ENCODE measurements at regions of chr11 and their contacts with region 1.

Region 1: GRCh38 chr11:30573951-30574350 is 12.2 kb downstream of the MPPED2 start:
- DNase-seq: peak; percentile 64
- ATAC-seq: peak; percentile 85
- H3K4me3 ChIP-seq: no peak overlapping the region
- H3K27ac ChIP-seq: no peak overlapping the region
- H3K4me1 ChIP-seq: no peaks in the 10 kb centered on the region
- H3K27me3 ChIP-seq: peaks cover 2% of the 10 kb centered on the region; the same call in 1 of the 2 replicates
- CTCF ChIP-seq: no peak
- POLR2A ChIP-seq: no peak
- RAD21 ChIP-seq: no peak

Region 2: DNA sequence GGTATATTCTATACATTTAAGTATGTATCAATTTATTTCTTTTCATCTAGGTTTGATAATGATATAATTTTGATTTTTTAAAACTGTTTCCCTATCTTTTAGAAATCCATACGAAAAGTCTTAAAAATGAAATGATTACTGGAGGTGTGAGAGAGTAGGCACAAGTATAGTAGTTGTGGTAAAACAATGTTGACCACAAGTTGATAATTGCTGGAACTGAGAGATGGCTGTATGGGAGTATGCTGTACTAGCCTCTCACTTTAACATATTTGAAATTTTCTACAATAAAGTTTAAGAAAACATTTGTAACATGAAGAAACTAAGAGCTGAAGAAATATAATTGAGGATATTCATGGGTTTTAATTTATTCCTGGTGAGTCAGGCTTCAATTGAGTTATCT is 313.1 kb before region 1 on chr11:
- CTCF ChIA-PET with region 1: no interaction called
- POLR2A ChIA-PET with region 1: no interaction called
- dilution Hi-C with region 1: no loop called
- in situ Hi-C with region 1: no loop called
- intact Hi-C with region 1: no loop called
- DNase-seq: no peak
- ATAC-seq: no peak
- H3K4me3 ChIP-seq: no peak overlapping the region
- H3K27ac ChIP-seq: no peak overlapping the region
- H3K4me1 ChIP-seq: no peaks in the 10 kb centered on the region
- H3K27me3 ChIP-seq: no peaks in the 10 kb centered on the region
- CTCF ChIP-seq: no peak
- POLR2A ChIP-seq: no peak
- RAD21 ChIP-seq: no peak

Region 3: DNA sequence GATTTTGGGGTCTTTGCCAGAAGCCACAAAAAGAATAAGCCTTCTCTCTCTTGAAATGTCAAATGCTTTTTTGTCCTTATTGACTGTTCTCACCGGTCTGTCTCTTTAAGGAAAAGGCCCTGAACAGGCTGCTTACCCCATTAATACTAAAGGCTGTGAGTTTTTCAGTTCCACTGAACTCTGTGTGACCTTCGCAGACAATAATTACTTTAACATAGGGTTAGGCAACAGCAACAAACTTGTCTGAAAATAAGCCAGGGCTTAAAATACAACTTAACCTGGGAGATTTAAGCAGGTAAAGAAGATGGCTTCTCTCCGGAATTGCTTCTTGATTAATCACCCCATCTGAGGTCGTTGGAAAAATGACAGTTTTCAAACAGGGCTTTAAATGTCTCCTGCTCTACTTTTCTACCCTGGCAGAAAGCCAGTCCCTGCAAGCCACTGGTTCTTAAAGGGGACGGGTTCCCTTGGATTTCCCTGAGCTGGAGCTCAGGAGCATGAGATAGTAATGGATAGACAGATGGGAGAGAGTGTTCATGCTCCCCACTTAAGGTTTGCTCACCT is 181.6 kb before region 1 on chr11:
- CTCF ChIA-PET with region 1: no interaction called
- POLR2A ChIA-PET with region 1: no interaction called
- dilution Hi-C with region 1: no loop called
- in situ Hi-C with region 1: no loop called
- intact Hi-C with region 1: no loop called
- DNase-seq: no peak
- ATAC-seq: no peak
- H3K4me3 ChIP-seq: no peak overlapping the region
- H3K27ac ChIP-seq: no peak overlapping the region
- H3K4me1 ChIP-seq: no peaks in the 10 kb centered on the region
- H3K27me3 ChIP-seq: no peaks in the 10 kb centered on the region
- CTCF ChIP-seq: no peak
- POLR2A ChIP-seq: no peak
- RAD21 ChIP-seq: no peak

Region 4: DNA sequence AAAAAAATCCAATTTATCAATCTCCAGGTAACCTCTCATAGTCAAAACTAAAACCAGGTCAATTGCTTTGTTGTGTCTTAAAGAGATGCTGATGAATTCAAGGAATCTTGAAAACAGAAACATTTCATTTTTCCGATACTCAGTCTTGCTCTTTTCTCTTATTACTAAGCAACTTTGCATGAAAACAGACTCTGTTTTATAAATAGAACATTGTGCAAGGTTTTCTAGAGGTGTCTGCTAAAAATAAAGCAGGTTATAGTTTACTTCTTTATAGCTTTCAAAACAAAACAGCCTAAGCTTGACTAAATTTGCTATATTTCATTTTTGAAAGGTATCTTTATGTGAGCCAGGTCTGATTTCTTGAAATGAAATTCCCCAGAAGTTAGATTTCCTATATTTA is 141.8 kb before region 1 on chr11:
- CTCF ChIA-PET with region 1: no interaction called
- POLR2A ChIA-PET with region 1: no interaction called
- dilution Hi-C with region 1: no loop called
- in situ Hi-C with region 1: no loop called
- intact Hi-C with region 1: loop called (anchors 5 kb)
- DNase-seq: no peak
- ATAC-seq: no peak
- H3K4me3 ChIP-seq: no peak overlapping the region
- H3K27ac ChIP-seq: no peak overlapping the region
- H3K4me1 ChIP-seq: no peaks in the 10 kb centered on the region
- H3K27me3 ChIP-seq: no peaks in the 10 kb centered on the region; the same call in 1 of the 2 replicates
- CTCF ChIP-seq: no peak
- POLR2A ChIP-seq: no peak
- RAD21 ChIP-seq: no peak

Measured in IMR-90 (cell line).